ENCODE measurements at regions of chr10 and their contacts with region 1.

Region 1: DNA sequence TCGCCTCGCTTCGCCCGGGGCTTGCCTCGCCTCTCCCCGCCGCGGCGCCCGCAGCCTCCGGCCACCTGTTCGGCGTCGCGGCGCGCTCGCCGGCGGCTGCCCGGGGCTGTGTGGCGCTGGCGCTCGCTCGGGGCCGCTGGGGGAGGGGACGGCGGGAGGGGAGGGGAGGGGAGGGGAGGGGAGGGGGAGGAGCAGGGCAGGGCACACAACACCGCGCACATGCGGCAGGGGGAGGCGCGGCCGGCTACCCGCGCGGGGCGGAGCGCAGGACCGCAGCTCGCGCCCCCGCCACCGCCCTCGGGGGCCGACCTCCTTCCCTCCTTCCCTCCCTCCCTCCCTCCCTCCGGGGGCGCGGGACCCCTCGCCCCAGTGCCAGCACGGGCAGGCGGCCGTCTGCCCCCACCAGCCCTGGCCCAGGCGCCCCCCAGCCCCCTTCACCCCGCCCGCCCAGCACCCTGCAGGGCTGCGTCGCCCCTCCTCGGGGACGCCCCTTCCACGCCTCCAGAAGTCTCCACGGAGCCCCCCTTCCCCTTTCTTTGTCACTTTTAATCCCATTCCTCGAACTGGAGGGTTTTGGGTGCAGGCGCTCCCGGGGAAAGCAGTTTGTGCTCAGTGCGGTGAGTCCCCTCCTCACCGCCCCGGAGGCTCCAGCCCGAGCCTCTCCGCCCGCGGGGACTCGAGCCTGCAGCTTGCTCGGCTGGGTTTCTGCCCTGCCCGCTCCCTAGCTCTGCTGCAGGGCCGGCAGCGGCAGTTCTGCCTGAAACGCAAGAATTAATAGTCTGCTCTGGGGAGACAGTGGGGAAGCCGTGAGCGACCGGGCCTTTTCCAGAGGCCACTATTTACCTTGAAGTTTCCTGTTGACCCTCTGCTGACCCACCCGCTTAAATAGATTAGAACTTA is at the start of gene PARD3:
- DNase-seq: peak; percentile 81
- total RNA-seq, gene PARD3: 36.7 TPM

Region 2: GRCh38 chr10:34666008-34666705 is 149.3 kb before region 1 on chr10:
- intact Hi-C with region 1: loop called (anchors 5 kb)
- DNase-seq: no peak

Region 3: DNA sequence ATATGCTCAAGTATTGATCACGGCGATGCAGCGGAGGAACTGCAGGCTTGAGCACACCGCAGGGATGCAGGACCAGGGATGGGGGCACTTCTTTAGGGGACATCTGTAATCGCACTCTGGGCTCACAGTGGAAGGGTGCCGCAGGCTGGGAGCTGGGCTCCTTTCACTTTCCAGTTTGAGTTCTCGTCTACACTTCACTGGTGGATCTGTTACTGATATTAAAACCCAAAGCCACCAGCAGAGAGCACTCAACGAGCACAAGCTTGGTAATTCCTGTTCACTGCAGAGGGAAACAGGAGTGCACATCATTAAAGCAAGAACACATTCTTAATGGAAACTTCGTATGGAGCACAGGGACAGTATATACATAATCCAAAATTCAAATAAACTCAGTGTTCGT is 91.7 kb before region 1 on chr10:
- intact Hi-C with region 1: loop called (anchors 5 kb)
- DNase-seq: no peak

Region 4: DNA sequence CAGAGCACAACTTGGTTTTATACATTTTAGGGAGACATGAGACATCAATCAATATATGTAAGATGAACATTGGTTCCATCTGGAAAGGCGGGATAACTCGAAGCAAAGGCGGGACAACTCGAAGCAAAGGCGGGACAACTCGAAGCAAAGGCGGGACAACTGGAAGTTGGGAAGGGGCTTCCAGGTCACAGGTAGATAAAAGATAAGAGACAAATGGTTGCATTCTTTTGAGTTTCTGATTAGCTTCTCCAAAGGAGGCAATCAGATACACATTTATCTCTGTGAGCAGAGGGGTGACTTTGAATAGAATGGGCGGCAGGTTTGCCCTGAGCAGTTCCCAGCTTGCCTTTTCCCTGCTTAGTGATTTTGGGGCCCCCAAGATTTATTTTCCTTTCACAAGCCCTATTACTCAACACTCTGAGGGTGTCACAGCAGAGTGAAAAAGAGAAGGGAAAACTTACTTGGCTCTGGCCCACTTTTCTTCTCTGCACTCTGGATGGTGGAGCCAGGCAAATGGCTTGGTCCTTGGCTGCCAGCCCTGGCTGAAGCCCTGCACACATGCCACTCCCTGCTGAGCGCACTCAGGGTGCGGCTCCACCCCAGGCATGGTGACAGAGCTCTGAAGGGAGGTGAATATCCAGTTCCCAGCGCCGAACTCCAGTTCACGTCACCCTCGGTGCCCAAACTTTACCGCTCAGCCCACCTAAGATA is 47.0 kb before region 1 on chr10:
- intact Hi-C with region 1: loop called (anchors 5 kb)
- DNase-seq: peak; percentile 82

Region 5: GRCh38 chr10:34780818-34781380 is 34.5 kb before region 1 on chr10:
- intact Hi-C with region 1: loop called (anchors 2 kb)
- DNase-seq: no peak

Measured in cardiac septum (tissue), 1 donor.